ENCODE measurements at regions of chr15 and their contacts with region 1.

Region 1: DNA sequence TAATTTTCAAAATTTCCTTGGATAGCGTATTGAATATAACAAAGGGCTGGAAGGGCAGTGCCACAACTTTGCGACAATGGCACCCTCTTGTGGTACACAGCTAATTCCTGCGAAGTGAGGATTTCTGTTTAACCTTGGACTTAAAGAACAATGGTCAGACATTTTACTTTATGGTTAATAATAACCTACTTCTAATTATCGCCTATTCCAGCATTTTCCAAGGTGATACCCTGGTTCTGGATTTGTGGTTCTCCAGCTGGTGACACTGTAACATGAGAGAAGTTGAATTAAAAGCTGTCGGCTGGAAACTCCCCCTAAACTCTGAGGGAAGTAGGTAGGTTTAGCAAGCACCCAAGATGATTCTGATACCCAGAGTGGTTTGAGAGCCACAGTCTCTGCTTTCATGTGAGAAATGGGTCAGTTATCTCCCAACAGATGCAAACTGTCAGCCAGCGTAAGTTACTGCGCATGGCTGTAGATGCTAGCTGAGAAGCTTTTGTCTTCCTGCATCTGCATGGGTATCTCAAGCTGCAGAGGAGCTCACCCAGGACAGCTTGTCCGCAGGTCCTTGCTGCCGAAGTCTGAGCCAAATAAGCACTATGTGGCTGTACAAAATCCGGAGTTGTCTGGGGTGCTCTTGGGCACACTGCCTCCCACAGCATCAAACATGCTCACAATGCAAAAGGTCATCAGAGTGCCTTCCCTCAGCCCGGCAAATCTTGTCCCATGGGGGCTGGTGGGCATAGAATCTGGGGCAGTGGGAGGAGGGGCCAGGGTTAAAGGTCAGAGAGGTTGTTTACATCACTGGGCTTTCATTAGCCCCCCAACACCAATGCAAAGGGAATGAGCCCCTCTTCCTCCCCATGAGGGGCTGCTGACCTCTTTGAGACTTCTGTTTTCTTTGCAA is 6.6 kb upstream of the CHSY1 start:
- DNase-seq: peak; percentile 60 to 72 (median 68)
- H3K4me3 ChIP-seq: no peak overlapping the region
- H3K4me3 Mint-ChIP-seq: peak overlapping the region in 1 of 2 donors; percentile 71
- H3K27ac ChIP-seq: no peak overlapping the region
- H3K27ac Mint-ChIP-seq: no peak overlapping the region
- H3K4me1 ChIP-seq: no peaks in the 10 kb centered on the region
- H3K4me1 Mint-ChIP-seq: peaks cover 4% of the 10 kb centered on the region
- H3K27me3 ChIP-seq: peaks cover 0 to 9% of the 10 kb centered on the region in 2 donors
- H3K27me3 Mint-ChIP-seq: peaks cover 13 to 34% (median 31%) of the 10 kb centered on the region in 3 donors
- CTCF ChIP-seq: peak; percentile 83

Region 2: DNA sequence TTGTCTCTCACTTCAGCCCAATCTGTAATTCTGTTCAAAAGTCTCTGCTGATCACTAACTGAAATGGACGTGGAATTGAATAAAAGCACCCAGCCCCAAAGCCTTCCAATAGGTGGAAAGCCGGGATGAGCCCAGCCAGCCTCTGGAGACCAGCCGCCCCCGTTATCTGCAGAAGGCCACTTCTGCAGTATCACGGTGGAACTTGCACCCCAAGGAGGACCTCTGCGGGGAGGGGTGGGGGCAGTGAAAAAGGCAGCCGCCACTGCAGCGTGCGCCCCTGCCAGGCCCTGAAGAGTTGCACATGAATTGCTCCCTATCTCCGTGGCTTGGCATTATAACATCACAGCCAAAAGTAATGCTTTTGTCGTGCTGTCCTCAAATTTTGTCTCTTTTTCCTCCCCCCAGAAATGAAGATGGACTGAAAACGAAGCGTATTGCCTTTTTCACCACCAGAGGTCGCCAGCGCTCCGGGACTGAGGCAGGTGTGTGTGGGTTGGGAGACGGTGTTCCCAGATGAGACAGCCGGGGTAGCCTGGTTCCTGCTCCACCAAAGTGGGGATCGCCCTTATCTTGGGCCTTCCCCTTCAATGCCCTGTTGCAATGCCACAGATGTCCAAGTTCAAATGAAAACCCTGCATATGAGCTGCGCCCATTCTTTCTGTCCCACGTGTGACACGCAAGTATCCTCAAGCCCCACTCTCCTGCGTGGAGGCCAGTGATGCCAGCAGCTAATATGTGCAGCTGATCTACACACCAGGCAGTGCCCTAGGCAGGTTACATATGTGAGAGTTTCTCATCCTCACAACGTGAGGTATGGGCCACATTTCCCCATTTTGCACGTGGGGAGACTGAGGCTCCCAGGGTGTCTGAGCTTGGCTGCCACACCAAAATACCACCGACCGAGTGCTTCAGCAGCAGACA is 243.3 kb before region 1 on chr15:
- intact Hi-C with region 1: loop called (anchors 2 to 5 kb)
- DNase-seq: peak; percentile 17 to 51 (median 32)
- H3K4me3 ChIP-seq: no peak overlapping the region
- H3K4me3 Mint-ChIP-seq: peak overlapping the region in 1 of 2 donors; percentile 21
- H3K27ac ChIP-seq: no peak overlapping the region
- H3K27ac Mint-ChIP-seq: no peak overlapping the region
- H3K4me1 ChIP-seq: peaks cover 19 to 20% of the 10 kb centered on the region in 2 donors
- H3K4me1 Mint-ChIP-seq: peaks cover 21% of the 10 kb centered on the region
- H3K27me3 ChIP-seq: peaks cover 0 to 14% of the 10 kb centered on the region in 2 donors
- H3K27me3 Mint-ChIP-seq: peaks cover 7 to 22% (median 14%) of the 10 kb centered on the region in 3 donors
- CTCF ChIP-seq: peak; percentile 94

Region 3: DNA sequence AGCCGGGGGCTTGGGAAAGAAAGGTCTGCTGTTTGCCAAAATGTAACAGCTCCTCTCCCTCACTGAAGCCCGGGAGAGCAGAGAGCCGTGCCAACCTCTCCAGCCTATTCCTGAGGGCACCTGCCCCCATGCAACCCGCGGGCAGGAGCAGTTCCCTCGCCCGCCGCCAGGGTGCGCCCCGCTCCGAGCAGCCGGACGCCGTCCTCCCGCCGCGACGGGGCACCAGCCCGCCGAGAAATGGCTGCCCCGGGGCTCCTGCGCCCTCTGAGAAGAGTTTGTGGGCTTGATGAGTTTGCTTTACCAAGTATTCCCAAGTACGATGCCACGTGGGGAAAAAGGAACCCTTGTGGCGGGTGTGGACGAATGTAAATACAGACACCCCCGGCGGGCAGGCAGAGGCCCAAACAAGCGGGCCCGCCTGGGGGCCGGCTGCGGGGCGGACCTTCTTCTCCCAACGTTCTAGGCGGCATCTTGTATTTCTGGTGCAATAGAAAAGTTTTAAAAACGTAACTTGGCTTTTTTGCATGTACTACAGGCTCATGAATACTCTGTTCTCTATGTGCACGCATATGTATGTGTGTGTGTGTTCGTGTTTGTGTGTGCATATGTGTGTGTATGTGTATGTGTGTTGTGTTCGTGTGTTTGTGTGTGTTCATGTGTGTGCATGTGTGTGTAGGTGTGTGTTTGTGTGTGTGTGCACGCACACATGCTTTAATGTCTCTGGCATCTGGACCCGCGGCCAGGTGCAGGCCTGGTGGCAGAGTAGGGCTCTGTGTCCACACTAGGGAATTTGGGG is 169.5 kb before region 1 on chr15:
- intact Hi-C with region 1: loop called (anchors 1 kb)
- DNase-seq: peak; percentile 56 to 63 (median 63)
- H3K4me3 ChIP-seq: peak overlapping the region in 1 of 3 experiments; percentile 50
- H3K4me3 Mint-ChIP-seq: peak overlapping the region in 1 of 2 donors; percentile 72
- H3K27ac ChIP-seq: no peak overlapping the region
- H3K27ac Mint-ChIP-seq: peak overlapping the region in 1 of 7 donors; percentile 58
- H3K4me1 ChIP-seq: peaks cover 14 to 22% of the 10 kb centered on the region in 2 donors
- H3K4me1 Mint-ChIP-seq: peaks cover 17% of the 10 kb centered on the region
- H3K27me3 ChIP-seq: peaks cover 0 to 11% of the 10 kb centered on the region in 2 donors
- H3K27me3 Mint-ChIP-seq: peaks cover 28 to 41% (median 28%) of the 10 kb centered on the region in 3 donors
- CTCF ChIP-seq: peak; percentile 100

Measured in CD14-positive monocyte (primary cell).